ENCODE measurements at regions of chr1 and their contacts with region 1.

Region 1: GRCh38 chr1:59947047-59947938 is 20.7 kb upstream of the CYP2J2 start:
- DNase-seq: peak; percentile 29
- H3K4me3 ChIP-seq: no peak overlapping the region
- H3K27ac ChIP-seq: no peak overlapping the region
- H3K27me3 ChIP-seq: peaks cover 9% of the 10 kb centered on the region
- CTCF ChIP-seq: peak; percentile 98

Region 2: GRCh38 chr1:59732214-59732955 is 214.9 kb before region 1 on chr1:
- CTCF ChIA-PET with region 1: no interaction called
- POLR2A ChIA-PET with region 1: no interaction called
- DNase-seq: no peak
- H3K4me3 ChIP-seq: no peak overlapping the region
- H3K27ac ChIP-seq: peak overlapping the region; percentile 93
- H3K27me3 ChIP-seq: no peaks in the 10 kb centered on the region
- CTCF ChIP-seq: no peak

Region 3: GRCh38 chr1:59779949-59780348 is 167.3 kb before region 1 on chr1:
- CTCF ChIA-PET with region 1: interaction called, 18 read pairs
- POLR2A ChIA-PET with region 1: no interaction called
- DNase-seq: no peak
- H3K4me3 ChIP-seq: no peak overlapping the region
- H3K27ac ChIP-seq: no peak overlapping the region
- H3K27me3 ChIP-seq: no peaks in the 10 kb centered on the region
- CTCF ChIP-seq: no peak

Region 4: DNA sequence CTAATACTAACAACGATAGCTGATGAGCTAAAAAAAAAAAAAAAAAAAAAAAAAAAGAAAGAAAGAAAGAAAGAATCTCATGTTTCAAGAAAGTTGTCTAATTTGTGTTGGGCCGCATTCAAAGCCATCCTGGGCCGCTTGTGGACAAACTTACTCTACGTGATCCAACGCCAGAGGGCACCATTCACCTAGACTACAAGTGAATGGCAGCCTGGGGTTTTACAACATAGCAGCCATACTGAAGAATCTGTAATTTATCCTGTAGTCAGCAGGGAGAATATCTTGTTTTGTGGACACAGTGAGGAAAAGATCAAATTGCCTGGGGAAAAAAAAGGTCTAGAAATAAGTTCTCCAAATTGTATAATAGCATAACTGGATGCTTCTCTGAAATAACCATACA is 67.7 kb before region 1 on chr1:
- CTCF ChIA-PET with region 1: interaction called, 80 read pairs
- POLR2A ChIA-PET with region 1: no interaction called
- DNase-seq: peak; percentile 18
- H3K4me3 ChIP-seq: no peak overlapping the region
- H3K27ac ChIP-seq: no peak overlapping the region
- H3K27me3 ChIP-seq: no peaks in the 10 kb centered on the region
- CTCF ChIP-seq: peak; percentile 57

Region 5: DNA sequence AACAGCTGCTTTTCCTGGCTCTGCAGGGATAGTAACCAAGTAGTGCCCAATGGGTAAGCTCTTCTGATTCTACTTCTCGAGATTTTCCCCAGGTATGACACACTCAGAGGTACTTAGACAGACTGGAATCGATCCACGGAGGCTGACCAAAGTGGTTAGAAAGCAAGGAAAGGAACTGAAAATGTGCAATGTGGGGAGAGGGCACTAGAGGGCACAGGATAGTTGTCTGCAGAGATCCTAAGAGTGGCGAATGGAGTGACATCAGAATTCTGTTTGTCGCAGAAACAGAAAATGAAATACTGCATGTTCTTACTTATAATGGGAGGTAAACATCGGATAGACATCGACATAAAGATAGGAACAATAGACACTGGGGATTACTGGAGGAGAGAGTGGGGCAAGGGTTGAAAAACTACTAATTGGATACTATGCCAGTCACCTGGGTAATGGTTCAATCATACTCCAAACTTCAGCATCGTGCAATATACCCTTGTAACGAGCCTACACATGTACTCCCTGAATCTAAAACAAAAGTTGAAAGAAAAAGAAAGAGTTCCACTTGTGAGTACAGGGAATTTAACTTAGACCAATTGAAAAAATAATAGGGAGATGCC is 44.0 kb before region 1 on chr1:
- CTCF ChIA-PET with region 1: interaction called, 15 read pairs
- POLR2A ChIA-PET with region 1: no interaction called
- DNase-seq: no peak
- H3K4me3 ChIP-seq: no peak overlapping the region
- H3K27ac ChIP-seq: no peak overlapping the region
- H3K27me3 ChIP-seq: no peaks in the 10 kb centered on the region
- CTCF ChIP-seq: peak; percentile 49

Region 6: GRCh38 chr1:59926381-59927123 is 20.7 kb before region 1 on chr1 and contains the start of gene CYP2J2:
- CTCF ChIA-PET with region 1: interaction called, 14 read pairs
- POLR2A ChIA-PET with region 1: no interaction called
- DNase-seq: no peak
- H3K4me3 ChIP-seq: peak within 1 kb of the TSS; percentile 55
- H3K27ac ChIP-seq: no peak within 1 kb of the TSS
- H3K27me3 ChIP-seq: peaks cover 5% of the 10 kb centered on the region
- CTCF ChIP-seq: no peak
- polyA plus RNA-seq, gene CYP2J2: 0.06 and 0.10 TPM in 2 replicates

Measured in AG04450 (cell line).